Gastrocnemius medialis (tissue), 4 donors: ENCODE measurements at regions of chr15 and their contacts with region 1.

Region 1: GRCh38 chr15:77944002-77944867 is 133.3 kb downstream of the TBC1D2B start:
- DNase-seq: peak; percentile 82 to 89
- ATAC-seq: peak; percentile 96 to 98
- H3K4me3 ChIP-seq: peak overlapping the region; percentile 56 to 76 (median 70)
- H3K27ac ChIP-seq: peak overlapping the region; percentile 72 to 90 (median 86)
- H3K4me1 ChIP-seq: peaks cover 6 to 12% of the 10 kb centered on the region in 2 donors
- H3K27me3 ChIP-seq: no peaks in the 10 kb centered on the region
- CTCF ChIP-seq: no peak
- POLR2A ChIP-seq: peak; percentile 20 to 56

Region 2: GRCh38 chr15:78739996-78740903 is 796.0 kb after region 1 on chr15:
- in situ Hi-C with region 1: loop called in 1 of 4 experiments (anchors 25 kb)
- intact Hi-C with region 1: no loop called
- DNase-seq: peak in 1 of 2 donors; percentile 47
- ATAC-seq: peak in 1 of 2 donors; percentile 68
- H3K4me3 ChIP-seq: no peak overlapping the region
- H3K27ac ChIP-seq: no peak overlapping the region
- H3K4me1 ChIP-seq: no peaks in the 10 kb centered on the region
- H3K27me3 ChIP-seq: no peaks in the 10 kb centered on the region
- CTCF ChIP-seq: peak in 3 of 5 experiments; percentile 21 to 61 (median 36)
- POLR2A ChIP-seq: no peak